A673 (cell line): ENCODE measurements at regions of chr20 and their contacts with region 1.

Region 1: GRCh38 chr20:15692570-15692969 is 880.7 kb downstream of the KIF16B start:
- DNase-seq: no peak
- H3K4me3 ChIP-seq: no peak overlapping the region
- H3K27ac ChIP-seq: no peak overlapping the region
- H3K4me1 ChIP-seq: no peaks in the 10 kb centered on the region
- H3K27me3 ChIP-seq: no peaks in the 10 kb centered on the region
- CTCF ChIP-seq: no peak

Region 2: DNA sequence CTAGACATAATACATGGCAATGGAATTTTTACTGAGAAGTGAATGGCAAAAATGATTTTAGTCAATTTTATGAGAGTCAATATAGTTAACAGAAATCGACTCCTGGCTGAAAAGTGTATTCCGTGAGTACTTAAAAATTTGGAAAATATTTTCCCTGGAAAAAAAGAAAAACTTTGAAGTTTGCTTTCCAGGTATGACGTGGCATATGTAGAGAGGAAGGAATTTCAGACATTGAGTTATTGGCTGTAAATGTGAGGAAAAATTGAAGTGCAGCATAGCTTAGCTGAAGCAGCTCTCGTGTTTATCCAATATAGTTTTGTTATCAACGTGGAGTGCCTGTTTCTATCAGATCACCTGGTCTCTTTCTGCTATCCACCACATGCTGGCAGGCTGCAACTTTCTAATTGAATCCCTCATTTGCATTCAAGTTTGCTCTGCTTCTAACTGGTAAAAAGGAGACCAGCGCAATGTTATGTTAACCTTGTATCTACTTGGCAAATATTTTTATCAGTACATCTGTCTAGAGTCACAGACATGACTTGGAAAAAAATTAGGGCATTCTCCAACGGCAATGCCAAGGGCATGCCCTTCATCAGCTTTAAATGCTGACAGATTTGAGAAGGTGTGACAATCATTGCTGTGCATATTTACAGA is 252.4 kb before region 1 on chr20:
- CTCF ChIA-PET with region 1: no interaction called
- POLR2A ChIA-PET with region 1: no interaction called
- intact Hi-C with region 1: no loop called
- DNase-seq: no peak
- H3K4me3 ChIP-seq: no peak overlapping the region
- H3K27ac ChIP-seq: no peak overlapping the region
- H3K4me1 ChIP-seq: no peaks in the 10 kb centered on the region
- H3K27me3 ChIP-seq: no peaks in the 10 kb centered on the region
- CTCF ChIP-seq: no peak

Region 3: GRCh38 chr20:15634102-15634501 is 58.5 kb before region 1 on chr20:
- CTCF ChIA-PET with region 1: no interaction called
- POLR2A ChIA-PET with region 1: no interaction called
- intact Hi-C with region 1: loop called (anchors 5 kb)
- DNase-seq: no peak
- H3K4me3 ChIP-seq: no peak overlapping the region
- H3K27ac ChIP-seq: no peak overlapping the region
- H3K4me1 ChIP-seq: no peaks in the 10 kb centered on the region
- H3K27me3 ChIP-seq: no peaks in the 10 kb centered on the region
- CTCF ChIP-seq: no peak

Region 4: GRCh38 chr20:15806105-15806504 is 113.5 kb after region 1 on chr20:
- CTCF ChIA-PET with region 1: no interaction called
- POLR2A ChIA-PET with region 1: no interaction called
- intact Hi-C with region 1: no loop called
- DNase-seq: no peak
- H3K4me3 ChIP-seq: no peak overlapping the region
- H3K27ac ChIP-seq: no peak overlapping the region
- H3K4me1 ChIP-seq: no peaks in the 10 kb centered on the region
- H3K27me3 ChIP-seq: no peaks in the 10 kb centered on the region
- CTCF ChIP-seq: no peak